ENCODE measurements at regions of chr15 and their contacts with region 1.

Region 1: DNA sequence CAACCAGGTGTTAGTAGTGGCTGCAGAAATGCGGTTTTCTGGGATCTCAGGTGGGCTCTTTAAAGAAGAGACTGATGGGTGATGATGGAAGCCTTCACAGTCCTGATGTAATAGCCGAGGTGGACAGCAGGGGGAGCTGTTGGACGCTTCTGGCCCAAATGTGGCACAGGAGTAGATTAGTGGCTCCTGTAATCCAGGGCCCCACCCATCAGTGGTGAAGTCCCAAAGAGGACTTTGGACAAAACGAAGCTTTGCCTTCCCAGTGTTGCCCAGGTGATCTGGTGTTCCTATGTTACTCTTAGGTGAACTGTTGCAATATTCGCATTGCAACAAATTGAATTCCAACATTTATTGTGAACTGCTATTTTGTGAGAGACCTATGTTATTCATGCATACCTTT is 31.8 kb upstream of the MYZAP start:
- DNase-seq: peak; percentile 60 to 68
- H3K4me3 ChIP-seq: no peak overlapping the region
- H3K27ac ChIP-seq: no peak overlapping the region
- H3K4me1 ChIP-seq: peaks cover 4 to 6% of the 10 kb centered on the region in 2 donors
- H3K27me3 ChIP-seq: no peaks in the 10 kb centered on the region
- CTCF ChIP-seq: peak; percentile 61 to 93 (median 71)
- POLR2A ChIP-seq: no peak

Region 2: GRCh38 chr15:57609805-57610529 is 50.1 kb after region 1 on chr15:
- intact Hi-C with region 1: loop called (anchors 5 kb)
- DNase-seq: peak; percentile 88 to 93
- H3K4me3 ChIP-seq: no peak overlapping the region
- H3K27ac ChIP-seq: peak overlapping the region; percentile 31 to 84 (median 74)
- H3K4me1 ChIP-seq: peaks cover 24 to 29% of the 10 kb centered on the region in 2 donors
- H3K27me3 ChIP-seq: no peaks in the 10 kb centered on the region
- CTCF ChIP-seq: no peak
- POLR2A ChIP-seq: no peak

Region 3: DNA sequence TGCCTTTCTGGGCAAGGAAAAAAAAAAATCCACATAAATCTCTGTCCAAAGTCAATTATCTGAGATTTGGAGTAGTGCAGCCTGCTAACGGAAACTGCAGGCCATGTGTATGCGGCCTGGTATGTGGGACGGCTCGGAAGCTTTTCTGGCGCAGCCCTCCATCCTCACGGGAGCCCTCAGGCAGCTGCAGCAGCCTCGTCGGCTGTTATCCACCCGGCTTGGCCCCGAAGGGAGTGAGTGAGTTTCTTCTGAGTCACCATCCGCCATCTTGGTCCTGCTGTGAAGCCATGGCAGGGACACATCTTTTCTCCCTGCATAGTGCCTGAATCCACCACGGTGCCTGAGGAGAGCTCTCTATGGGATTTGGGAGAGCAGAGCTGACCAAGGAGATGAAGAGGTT is 209.4 kb after region 1 on chr15:
- intact Hi-C with region 1: no loop called
- DNase-seq: peak; percentile 6 to 10
- H3K4me3 ChIP-seq: no peak overlapping the region
- H3K27ac ChIP-seq: no peak overlapping the region
- H3K4me1 ChIP-seq: no peaks in the 10 kb centered on the region
- H3K27me3 ChIP-seq: no peaks in the 10 kb centered on the region
- CTCF ChIP-seq: no peak
- POLR2A ChIP-seq: no peak

Region 4: DNA sequence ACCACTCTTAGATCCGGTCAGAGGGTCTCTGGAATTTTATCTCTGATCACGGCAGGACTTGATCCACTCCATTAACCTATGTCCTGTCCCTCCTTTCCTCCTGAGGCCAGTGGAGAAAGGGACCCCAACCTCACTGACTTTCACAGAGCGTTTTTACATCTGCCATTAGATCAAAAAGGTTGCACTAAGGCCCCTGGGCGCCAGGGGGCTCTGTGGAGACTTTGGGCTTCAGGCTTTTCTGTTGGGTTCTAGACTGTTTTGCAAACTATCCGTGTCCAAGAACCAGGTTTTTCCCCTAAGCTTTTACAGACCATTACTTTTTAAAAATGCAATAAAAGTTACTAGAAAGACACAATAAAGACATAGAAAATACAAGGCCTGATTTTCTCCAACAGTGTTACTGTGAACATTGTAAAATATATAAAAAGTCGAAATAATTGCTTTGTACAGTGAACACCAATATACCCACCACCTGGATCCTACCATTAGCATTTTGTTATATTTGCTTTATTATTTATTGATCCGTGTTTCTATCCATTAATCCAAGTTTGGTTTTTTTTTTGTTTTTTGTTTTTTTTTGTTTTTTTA is 306.4 kb after region 1 on chr15:
- intact Hi-C with region 1: loop called (anchors 10 kb)
- DNase-seq: peak; percentile 63 to 73
- H3K4me3 ChIP-seq: no peak overlapping the region
- H3K27ac ChIP-seq: no peak overlapping the region
- H3K4me1 ChIP-seq: no peaks in the 10 kb centered on the region
- H3K27me3 ChIP-seq: no peaks in the 10 kb centered on the region
- CTCF ChIP-seq: peak; percentile 32 to 81 (median 62)
- POLR2A ChIP-seq: no peak

Measured in thyroid gland (tissue), 4 donors.